PC-3 (cell line): ENCODE measurements at regions of chr4 and their contacts with region 1.

Region 1: GRCh38 chr4:31370866-31371465 is 650.8 kb downstream of the PCDH7 start:
- DNase-seq: peak; percentile 75
- ATAC-seq: 0 out of 2 replicates have a peak, but pooled peaks have one; percentile 37
- H3K4me3 ChIP-seq: no peak overlapping the region
- H3K27ac ChIP-seq: no peak overlapping the region
- H3K4me1 ChIP-seq: peaks cover 6% of the 10 kb centered on the region; the same call in 1 of the 2 replicates
- H3K27me3 ChIP-seq: no peaks in the 10 kb centered on the region
- CTCF ChIP-seq: peak; percentile 77

Region 2: GRCh38 chr4:31674313-31674947 is 303.5 kb after region 1 on chr4:
- CTCF ChIA-PET with region 1: interaction called, 3 read pairs
- POLR2A ChIA-PET with region 1: no interaction called
- intact Hi-C with region 1: loop called (anchors 1 kb)
- DNase-seq: peak; percentile 54
- ATAC-seq: peak; percentile 54; the same call in 1 of the 2 replicates
- H3K4me3 ChIP-seq: no peak overlapping the region
- H3K27ac ChIP-seq: no peak overlapping the region
- H3K4me1 ChIP-seq: no peaks in the 10 kb centered on the region
- H3K27me3 ChIP-seq: no peaks in the 10 kb centered on the region
- CTCF ChIP-seq: peak; percentile 53

Region 3: DNA sequence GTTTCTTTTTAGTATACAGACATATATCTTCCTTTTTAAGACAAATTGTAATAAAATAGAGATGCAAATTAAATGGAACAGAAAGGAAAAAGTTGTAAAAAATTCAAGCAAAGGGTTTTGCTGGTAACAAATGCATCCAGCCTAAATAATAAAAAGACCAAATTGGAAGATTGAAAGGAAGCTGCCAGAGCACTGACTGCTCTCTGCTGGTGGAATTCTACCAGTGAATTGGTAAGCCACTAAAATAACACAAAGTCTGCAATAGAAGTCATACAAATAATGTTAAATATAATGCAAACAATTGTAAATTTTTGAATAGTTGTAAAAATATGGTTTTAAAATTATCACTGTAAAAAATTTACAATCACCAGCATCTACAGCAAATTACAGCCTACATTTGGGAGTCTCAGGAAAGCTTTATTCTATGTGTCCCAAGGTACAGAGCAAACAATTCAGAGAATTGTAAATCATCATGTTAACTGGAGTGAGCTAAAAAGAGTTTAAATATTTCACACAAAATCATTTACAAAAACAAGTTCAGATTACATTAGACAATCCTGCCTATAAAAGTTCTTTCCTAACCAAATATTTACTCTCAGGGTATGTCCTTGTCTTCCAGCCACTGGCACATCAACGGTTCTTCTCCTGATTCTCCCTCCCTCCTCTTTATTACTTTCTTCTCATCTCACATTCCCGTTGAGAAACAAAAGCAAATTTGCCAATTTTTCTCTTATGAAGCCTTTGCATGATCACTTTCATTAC is 671.7 kb after region 1 on chr4:
- CTCF ChIA-PET with region 1: no interaction called
- POLR2A ChIA-PET with region 1: no interaction called
- intact Hi-C with region 1: loop called (anchors 5 kb)
- DNase-seq: no peak
- ATAC-seq: peak; percentile 83
- H3K4me3 ChIP-seq: no peak overlapping the region
- H3K27ac ChIP-seq: no peak overlapping the region
- H3K4me1 ChIP-seq: peaks cover 10% of the 10 kb centered on the region; the same call in 1 of the 2 replicates
- H3K27me3 ChIP-seq: no peaks in the 10 kb centered on the region
- CTCF ChIP-seq: peak; percentile 28; the same call in 1 of the 2 replicates